GM12878 (cell line): ENCODE measurements at regions of chr3 and their contacts with region 1.

Region 1: GRCh38 chr3:98223907-98224672 is 40.0 kb upstream of the OR5H6 start:
- DNase-seq: no peak
- ATAC-seq: peak; percentile 70
- H3K4me3 ChIP-seq: no peak overlapping the region
- H3K27ac ChIP-seq: no peak overlapping the region
- H3K4me1 ChIP-seq: no peaks in the 10 kb centered on the region
- H3K27me3 ChIP-seq: no peaks in the 10 kb centered on the region
- CTCF ChIP-seq: no peak
- EP300 ChIP-seq: no peak
- POLR2A ChIP-seq: no peak
- RAD21 ChIP-seq: no peak

Region 2: DNA sequence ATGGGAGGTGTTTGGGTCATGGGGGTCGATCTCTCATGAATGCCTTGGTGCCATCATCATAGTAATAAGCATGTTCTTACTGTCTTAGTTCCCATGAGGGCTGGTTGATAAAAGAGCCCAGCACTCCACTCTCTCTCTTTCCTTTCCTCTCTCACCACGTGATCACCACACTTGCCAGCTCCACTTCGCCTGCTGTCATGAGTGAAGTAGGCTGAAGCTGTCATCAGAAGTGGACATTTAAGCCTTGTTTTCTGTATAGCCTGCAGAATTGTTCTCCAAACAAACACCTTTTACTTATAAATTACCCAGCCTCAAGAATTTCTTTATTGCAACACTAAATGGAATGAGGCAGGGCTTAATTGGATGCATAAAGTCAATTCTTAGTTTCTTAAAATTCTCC is 87.5 kb before region 1 on chr3:
- CTCF ChIA-PET with region 1: no interaction called
- POLR2A ChIA-PET with region 1: no interaction called
- RAD21 ChIA-PET with region 1: no interaction called
- SMC1A ChIA-PET with region 1: no interaction called
- in situ Hi-C with region 1: no loop called
- intact Hi-C with region 1: no loop called
- DNase-seq: no peak
- ATAC-seq: no peak
- H3K4me3 ChIP-seq: no peak overlapping the region
- H3K27ac ChIP-seq: no peak overlapping the region
- H3K4me1 ChIP-seq: no peaks in the 10 kb centered on the region; the same call in 1 of the 2 replicates
- H3K27me3 ChIP-seq: no peaks in the 10 kb centered on the region
- CTCF ChIP-seq: no peak
- EP300 ChIP-seq: no peak
- POLR2A ChIP-seq: no peak
- RAD21 ChIP-seq: no peak

Region 3: DNA sequence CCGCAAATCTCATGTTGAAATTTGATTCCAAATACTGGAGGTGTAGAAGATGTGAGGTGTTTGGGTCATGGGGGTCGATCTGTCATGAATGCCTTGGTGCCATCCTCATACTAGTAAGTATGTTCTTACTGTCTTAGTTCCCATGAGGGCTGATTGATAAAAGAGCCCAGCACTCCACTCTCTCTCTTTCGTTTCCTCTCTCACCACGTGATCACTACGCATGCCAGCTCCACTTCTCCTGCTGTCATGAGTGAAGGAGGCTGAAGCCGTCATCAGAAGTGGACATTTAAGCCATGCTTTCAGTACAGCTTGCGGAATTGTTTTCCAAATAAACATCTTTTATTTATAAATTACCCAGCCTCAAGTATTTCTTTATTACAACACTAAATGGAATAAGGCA is 51.5 kb before region 1 on chr3:
- CTCF ChIA-PET with region 1: no interaction called
- POLR2A ChIA-PET with region 1: no interaction called
- RAD21 ChIA-PET with region 1: no interaction called
- SMC1A ChIA-PET with region 1: no interaction called
- in situ Hi-C with region 1: no loop called
- intact Hi-C with region 1: no loop called
- DNase-seq: no peak
- ATAC-seq: no peak; the same call in 2 of the 3 replicates
- H3K4me3 ChIP-seq: no peak overlapping the region
- H3K27ac ChIP-seq: no peak overlapping the region
- H3K4me1 ChIP-seq: no peaks in the 10 kb centered on the region
- H3K27me3 ChIP-seq: no peaks in the 10 kb centered on the region
- CTCF ChIP-seq: no peak
- EP300 ChIP-seq: no peak
- POLR2A ChIP-seq: no peak
- RAD21 ChIP-seq: no peak

Region 4: GRCh38 chr3:98240131-98240530 is 16.0 kb after region 1 on chr3:
- CTCF ChIA-PET with region 1: no interaction called
- POLR2A ChIA-PET with region 1: interaction called, 4 read pairs
- RAD21 ChIA-PET with region 1: no interaction called
- SMC1A ChIA-PET with region 1: interaction called, 18 read pairs
- in situ Hi-C with region 1: no loop called
- intact Hi-C with region 1: no loop called
- DNase-seq: no peak
- ATAC-seq: peak; percentile 85
- H3K4me3 ChIP-seq: no peak overlapping the region
- H3K27ac ChIP-seq: no peak overlapping the region
- H3K4me1 ChIP-seq: no peaks in the 10 kb centered on the region; the same call in 1 of the 2 replicates
- H3K27me3 ChIP-seq: no peaks in the 10 kb centered on the region
- CTCF ChIP-seq: no peak
- EP300 ChIP-seq: no peak
- POLR2A ChIP-seq: no peak
- RAD21 ChIP-seq: no peak